ENCODE measurements at regions of chr15 and their contacts with region 1.

Region 1: DNA sequence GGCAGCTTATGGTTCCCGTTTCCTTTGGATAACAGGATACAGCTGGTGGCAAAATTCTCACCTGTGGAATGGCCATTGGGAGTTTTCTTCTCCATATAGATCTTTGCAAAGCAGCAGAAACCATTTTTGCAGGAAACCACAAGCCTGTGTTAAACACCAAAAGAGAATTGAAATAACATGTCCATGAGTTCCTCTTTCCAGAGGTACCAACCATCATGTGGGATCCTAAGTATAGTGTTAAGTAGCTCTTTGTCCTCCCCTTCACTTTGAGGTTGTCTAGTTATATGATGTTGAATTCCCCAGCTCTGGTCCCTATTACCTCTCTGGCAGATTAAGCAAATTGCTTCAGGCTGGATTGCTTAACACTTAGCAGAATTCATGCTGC is 94.9 kb downstream of the AKAP13 start:
- DNase-seq: no peak
- CTCF ChIP-seq: no peak

Region 2: DNA sequence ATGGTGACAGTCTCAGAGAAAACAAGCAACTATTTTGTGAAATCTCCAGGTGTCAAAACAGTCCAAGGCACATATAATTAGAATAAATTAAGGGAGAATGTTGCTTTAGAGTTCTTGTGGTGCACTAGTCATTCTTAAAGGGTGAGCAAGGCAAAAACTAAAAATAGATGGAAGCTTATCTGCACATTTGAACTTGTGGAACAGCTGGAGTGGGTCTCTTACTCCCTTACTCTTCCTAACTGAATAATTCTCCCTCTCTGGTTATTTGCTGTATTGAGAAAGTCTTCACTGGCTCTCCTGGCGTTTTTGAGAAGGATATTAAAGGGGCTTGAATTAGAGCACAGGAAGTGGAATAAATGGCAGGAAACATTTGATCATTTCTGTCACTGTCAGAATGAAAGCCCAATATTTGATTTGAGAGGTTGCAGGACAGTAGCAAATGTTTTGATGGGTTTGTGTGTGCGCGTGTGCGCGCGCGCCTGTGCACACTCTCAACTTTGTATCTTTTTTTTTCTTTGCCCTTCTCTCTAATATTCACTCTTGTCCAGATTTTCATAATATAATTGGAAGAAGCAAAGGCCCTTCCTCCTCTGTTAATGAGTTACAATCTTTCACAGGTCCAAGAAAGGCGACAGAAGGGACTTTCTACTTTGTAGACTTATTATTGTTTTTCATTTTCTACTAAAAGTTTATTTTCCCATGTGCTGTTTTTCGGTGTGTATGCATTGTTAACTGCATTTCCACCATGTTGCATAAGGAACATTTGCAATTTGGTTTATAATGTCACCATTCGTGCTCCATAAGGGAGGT is 54.0 kb before region 1 on chr15:
- in situ Hi-C with region 1: loop called (anchors 10 kb)
- DNase-seq: no peak
- CTCF ChIP-seq: no peak